ENCODE measurements at regions of chr2 and their contacts with region 1.

Region 1: DNA sequence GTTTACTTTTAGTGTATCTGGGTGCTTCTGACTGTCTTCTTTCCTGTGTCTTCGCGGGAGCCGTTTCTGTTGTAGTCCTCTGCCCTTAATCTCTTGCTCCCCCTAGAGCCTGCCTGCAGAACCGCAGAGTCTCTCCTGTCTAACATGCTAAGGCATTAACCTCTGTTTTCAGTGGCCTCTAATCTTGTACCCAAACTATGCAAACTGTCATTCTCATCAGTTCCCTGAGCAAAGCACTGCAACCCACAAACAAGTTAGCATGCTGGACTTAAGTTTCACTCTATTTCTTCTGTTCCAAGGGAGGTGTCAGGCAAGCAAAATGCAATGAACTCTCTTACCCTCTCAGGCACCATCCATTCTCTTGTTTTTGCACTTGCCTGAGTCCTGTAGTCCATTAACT is 138.4 kb downstream of the OTX1 start:
- DNase-seq: peak; percentile 71
- ATAC-seq: peak; percentile 74
- H3K4me3 ChIP-seq: no peak overlapping the region; a peak in 1 of 6 replicates
- H3K27ac ChIP-seq: no peak overlapping the region
- H3K4me1 ChIP-seq: peaks cover 58% of the 10 kb centered on the region
- H3K27me3 ChIP-seq: no peaks in the 10 kb centered on the region
- CTCF ChIP-seq: peak; percentile 92
- EP300 ChIP-seq: peak in 1 of 2 experiments; percentile 12; a peak in 1 of 4 replicates
- POLR2A ChIP-seq: no peak
- RAD21 ChIP-seq: peak; percentile 68

Region 2: DNA sequence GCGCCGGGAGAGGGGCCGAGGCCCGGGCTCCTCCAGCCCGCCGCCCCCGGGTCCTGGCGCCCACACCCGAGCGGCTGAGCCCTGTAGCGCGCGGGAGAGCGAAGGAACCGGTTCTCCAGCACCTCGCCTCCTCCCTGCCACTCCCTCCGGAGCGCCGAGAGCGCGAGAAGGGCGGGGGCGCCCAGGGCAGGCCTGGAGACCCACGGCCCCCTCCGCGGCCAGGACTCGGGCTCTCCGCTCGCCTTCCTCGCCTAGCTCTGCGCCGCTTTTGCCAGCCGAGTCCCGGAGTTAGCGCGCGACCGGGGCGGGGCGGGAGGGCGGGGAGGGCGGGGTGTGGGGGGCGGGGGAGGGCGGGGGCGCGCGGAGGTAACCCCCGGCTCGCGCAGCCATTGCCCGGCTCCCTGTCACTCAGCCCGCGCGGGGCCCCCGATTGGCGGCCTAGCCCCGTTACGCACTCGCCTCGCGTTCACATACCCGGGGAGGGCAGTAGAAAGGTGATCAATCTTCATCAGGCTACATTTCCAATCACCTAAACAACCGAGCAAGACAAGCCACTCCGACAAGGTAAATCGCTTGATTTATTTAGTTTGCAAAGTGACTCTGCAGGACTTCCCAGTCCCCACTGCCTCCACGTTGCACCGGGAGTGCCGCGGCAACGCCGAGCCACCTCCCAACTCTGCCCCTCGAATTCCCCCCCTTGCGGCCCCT is 138.5 kb before region 1 on chr2 and contains the start of gene OTX1:
- CTCF ChIA-PET with region 1: no interaction called
- POLR2A ChIA-PET with region 1: interaction called, 4 read pairs
- in situ Hi-C with region 1: no loop called
- intact Hi-C with region 1: loop called (anchors 1 kb)
- DNase-seq: peak; percentile 82
- ATAC-seq: peak; percentile 87
- H3K4me3 ChIP-seq: peak within 1 kb of the TSS; percentile 80 to 99 (median 98)
- H3K27ac ChIP-seq: peak within 1 kb of the TSS; percentile 90
- H3K4me1 ChIP-seq: peaks cover 30% of the 10 kb centered on the region
- H3K27me3 ChIP-seq: no peaks in the 10 kb centered on the region; a peak in 1 of 5 replicates
- CTCF ChIP-seq: peak; percentile 18; the same call in 1 of the 2 replicates
- EP300 ChIP-seq: no peak
- POLR2A ChIP-seq: peak; percentile 75 to 87
- RAD21 ChIP-seq: peak; percentile 77
- total RNA-seq, gene OTX1: 3.0 and 5.0 TPM in 2 replicates

Measured in HepG2 (cell line).